Activated B cell treated with CpG ODN at 0.5 μM for 24 hours (primary cell): ENCODE measurements at regions of chr18 and their contacts with region 1.

Region 1: DNA sequence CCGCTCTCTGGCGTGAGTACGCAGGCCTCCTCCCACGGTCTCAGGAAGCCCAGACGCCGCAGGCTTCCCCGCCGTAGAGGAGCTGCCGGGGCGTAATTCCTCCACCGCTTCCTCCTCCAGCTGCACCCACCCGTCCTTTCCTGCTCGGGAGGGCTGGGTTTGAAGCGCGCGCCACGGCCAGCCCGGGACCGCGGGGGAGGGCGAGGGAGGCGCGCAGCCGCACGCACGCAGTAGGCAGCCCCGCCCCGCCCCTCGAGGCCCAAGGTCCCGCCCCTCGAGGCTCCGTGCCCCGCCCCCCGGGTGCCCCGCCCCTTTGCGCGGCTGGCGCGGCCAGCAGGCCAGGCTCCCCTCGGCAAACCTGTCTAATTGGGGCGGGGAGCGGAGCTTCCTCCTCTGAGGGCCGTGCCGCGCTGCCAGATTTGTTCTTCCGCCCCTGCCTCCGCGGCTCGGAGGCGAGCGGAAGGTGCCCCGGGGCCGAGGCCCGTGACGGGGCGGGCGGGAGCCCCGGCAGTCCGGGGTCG is at the start of gene MALT1:
- DNase-seq: peak; percentile 98
- ATAC-seq: peak; percentile 89
- H3K4me3 Mint-ChIP-seq: peak within 1 kb of the TSS; percentile 95
- H3K27ac Mint-ChIP-seq: peak within 1 kb of the TSS; percentile 95
- H3K4me1 Mint-ChIP-seq: peaks cover 74% of the 10 kb centered on the region
- H3K27me3 Mint-ChIP-seq: no peaks in the 10 kb centered on the region
- CTCF ChIP-seq: no peak
- total RNA-seq, gene MALT1: 61.6 and 75.6 TPM in 2 replicates

Region 2: DNA sequence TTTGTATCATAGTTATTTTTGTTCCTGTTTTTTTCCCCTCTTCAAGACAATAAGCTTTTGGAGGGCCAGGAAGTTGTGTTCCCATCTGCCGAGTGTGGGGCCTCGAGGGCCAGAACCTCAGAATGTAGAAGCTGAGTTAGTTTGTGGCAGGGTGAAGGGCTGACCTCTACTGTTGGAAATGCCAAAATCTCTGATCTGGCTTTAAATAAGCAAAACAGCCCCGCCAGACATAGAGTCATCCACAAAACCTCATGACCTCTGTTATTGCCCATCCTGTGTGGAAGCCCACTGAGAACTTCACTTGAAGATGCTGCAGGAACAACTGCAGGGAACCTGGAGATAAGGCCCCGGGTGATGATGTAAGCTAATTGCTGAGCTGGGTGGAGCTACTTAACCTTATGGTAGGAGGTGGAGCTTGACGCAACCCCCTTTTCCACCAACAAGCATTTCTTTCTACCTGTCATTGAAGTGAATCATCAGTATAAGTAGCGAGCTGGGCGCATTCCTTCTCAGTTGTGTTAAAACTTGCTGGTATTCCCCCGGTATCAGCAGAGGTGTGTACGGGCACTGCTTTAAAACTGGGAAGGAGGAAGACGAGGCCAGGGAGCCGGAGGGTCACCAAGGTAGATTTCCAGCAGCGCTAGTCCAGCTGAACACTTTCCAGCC is 450.0 kb before region 1 on chr18:
- CTCF ChIA-PET with region 1: no interaction called
- POLR2A ChIA-PET with region 1: no interaction called
- intact Hi-C with region 1: no loop called
- DNase-seq: no peak
- ATAC-seq: no peak
- H3K4me3 Mint-ChIP-seq: peak overlapping the region; percentile 33
- H3K27ac Mint-ChIP-seq: no peak overlapping the region
- H3K4me1 Mint-ChIP-seq: peaks cover 44% of the 10 kb centered on the region
- H3K27me3 Mint-ChIP-seq: no peaks in the 10 kb centered on the region
- CTCF ChIP-seq: no peak

Region 3: GRCh38 chr18:58535340-58536201 is 135.6 kb before region 1 on chr18:
- CTCF ChIA-PET with region 1: interaction called, 28 read pairs
- POLR2A ChIA-PET with region 1: interaction called, 93 read pairs
- intact Hi-C with region 1: loop called (anchors 1 kb)
- DNase-seq: no peak
- ATAC-seq: peak; percentile 78
- H3K4me3 Mint-ChIP-seq: peak overlapping the region; percentile 63
- H3K27ac Mint-ChIP-seq: peak overlapping the region; percentile 81
- H3K4me1 Mint-ChIP-seq: peaks cover 68% of the 10 kb centered on the region
- H3K27me3 Mint-ChIP-seq: no peaks in the 10 kb centered on the region
- CTCF ChIP-seq: no peak

Region 4: GRCh38 chr18:58567453-58568196 is 103.5 kb before region 1 on chr18:
- CTCF ChIA-PET with region 1: no interaction called
- POLR2A ChIA-PET with region 1: interaction called, 17 read pairs
- intact Hi-C with region 1: loop called (anchors 2 kb)
- DNase-seq: no peak
- ATAC-seq: no peak
- H3K4me3 Mint-ChIP-seq: no peak overlapping the region
- H3K27ac Mint-ChIP-seq: no peak overlapping the region
- H3K4me1 Mint-ChIP-seq: peaks cover 33% of the 10 kb centered on the region
- H3K27me3 Mint-ChIP-seq: no peaks in the 10 kb centered on the region
- CTCF ChIP-seq: no peak

Region 5: DNA sequence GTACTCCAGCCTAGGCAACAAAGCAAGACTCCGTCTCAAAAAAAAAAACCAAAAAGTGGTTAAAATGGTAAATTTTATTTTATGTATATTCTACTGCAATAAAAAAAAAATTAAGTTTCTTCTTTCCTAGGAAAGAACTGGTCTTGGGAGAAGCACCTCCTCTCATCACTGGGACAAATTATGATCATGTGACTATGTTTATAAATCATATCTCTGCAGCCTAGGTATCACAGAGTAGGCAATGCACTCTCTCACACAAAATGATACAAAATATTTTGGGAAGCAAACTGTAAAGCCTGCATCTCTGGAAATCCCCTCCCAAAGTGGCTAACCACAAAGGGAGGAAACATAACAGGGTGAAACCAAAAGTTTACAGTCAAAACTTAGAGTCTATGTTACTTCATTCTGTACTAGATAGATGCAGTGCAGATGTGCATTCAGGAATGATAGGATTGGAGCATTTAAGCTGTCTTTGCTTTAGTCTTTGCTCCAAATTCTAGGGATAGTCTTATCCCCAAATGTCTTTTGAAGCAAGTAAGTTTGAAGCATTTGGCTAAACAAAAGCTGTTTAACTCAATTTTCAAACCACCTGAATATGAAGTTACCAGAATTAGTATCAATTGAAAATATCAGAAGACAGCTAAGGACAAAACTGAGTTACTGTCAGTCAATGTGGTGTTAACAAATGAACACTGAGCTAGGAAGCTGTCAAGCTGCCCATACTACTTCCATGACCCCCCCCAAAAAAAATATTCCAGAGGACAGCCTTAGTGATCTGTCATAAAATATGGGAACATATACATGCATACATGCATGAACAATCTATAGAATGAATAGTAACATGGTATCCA is 21.0 kb before region 1 on chr18:
- CTCF ChIA-PET with region 1: interaction called, 3 read pairs
- POLR2A ChIA-PET with region 1: interaction called, 190 read pairs
- intact Hi-C with region 1: no loop called
- DNase-seq: no peak
- ATAC-seq: peak; percentile 93
- H3K4me3 Mint-ChIP-seq: peak overlapping the region; percentile 24
- H3K27ac Mint-ChIP-seq: peak overlapping the region; percentile 74
- H3K4me1 Mint-ChIP-seq: peaks cover 69% of the 10 kb centered on the region
- H3K27me3 Mint-ChIP-seq: no peaks in the 10 kb centered on the region
- CTCF ChIP-seq: no peak

Region 6: DNA sequence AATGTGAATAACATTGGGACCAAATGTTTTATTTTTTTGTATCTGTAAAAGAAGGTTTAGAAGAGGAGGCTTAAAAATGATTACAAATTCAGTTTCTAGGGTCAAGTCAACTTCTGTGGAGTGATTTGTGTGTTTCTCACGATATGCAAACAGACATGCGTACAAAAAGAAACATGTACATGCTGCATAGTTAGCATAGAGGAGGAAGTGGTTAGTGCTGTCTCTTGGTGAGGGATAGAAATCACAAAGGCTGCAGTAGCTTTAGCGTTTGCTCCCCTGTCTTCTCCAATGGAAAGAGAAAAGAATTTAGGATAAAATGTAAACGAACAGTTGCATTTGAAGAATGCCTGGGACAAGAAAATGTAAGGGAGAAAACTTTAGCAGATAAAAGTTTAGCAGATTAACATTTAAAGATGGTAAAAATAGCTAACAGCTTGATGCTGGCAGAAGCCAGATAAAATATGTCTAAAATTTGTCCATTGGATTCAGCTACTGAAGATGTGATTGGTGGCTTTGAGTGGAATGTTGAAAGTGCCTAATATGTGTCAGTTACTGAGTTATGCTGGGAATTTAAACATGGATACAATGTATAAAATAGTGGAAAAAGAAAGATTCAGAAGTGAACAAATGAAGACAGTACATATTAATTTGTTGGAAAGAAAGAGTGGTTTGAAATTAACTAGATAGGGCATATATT is 45.0 kb after region 1 on chr18:
- CTCF ChIA-PET with region 1: interaction called, 4 read pairs
- POLR2A ChIA-PET with region 1: interaction called, 17 read pairs
- intact Hi-C with region 1: loop called (anchors 1 kb)
- DNase-seq: no peak
- ATAC-seq: peak; percentile 58
- H3K4me3 Mint-ChIP-seq: peak overlapping the region; percentile 29
- H3K27ac Mint-ChIP-seq: peak overlapping the region; percentile 82
- H3K4me1 Mint-ChIP-seq: peaks cover 46% of the 10 kb centered on the region
- H3K27me3 Mint-ChIP-seq: no peaks in the 10 kb centered on the region
- CTCF ChIP-seq: no peak

Region 7: DNA sequence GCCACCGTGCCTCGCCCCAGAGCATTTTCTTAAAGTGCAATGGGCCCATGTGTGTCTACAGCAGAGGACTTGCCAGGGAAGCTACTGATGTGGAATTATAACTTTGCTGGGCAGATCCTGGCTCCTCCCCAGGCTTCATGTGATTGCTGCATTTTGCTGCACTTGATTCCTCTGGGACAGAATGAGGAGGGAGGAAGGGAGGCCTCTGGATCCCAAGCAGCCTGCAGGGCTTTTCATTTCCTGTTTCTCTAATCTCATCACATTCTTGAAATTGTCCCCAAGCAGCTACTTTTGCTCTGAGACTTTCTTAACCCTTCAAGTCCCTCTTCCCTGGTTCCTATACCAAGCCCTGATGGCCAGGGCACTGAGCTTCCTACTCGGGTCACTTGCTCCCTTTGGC is 334.1 kb after region 1 on chr18:
- CTCF ChIA-PET with region 1: no interaction called
- POLR2A ChIA-PET with region 1: interaction called, 10 read pairs
- intact Hi-C with region 1: no loop called
- DNase-seq: no peak
- ATAC-seq: no peak
- H3K4me3 Mint-ChIP-seq: no peak overlapping the region
- H3K27ac Mint-ChIP-seq: no peak overlapping the region
- H3K4me1 Mint-ChIP-seq: no peaks in the 10 kb centered on the region
- H3K27me3 Mint-ChIP-seq: no peaks in the 10 kb centered on the region
- CTCF ChIP-seq: no peak